GM10248 (cell line): ENCODE measurements at regions of chr10 and their contacts with region 1.

Region 1: DNA sequence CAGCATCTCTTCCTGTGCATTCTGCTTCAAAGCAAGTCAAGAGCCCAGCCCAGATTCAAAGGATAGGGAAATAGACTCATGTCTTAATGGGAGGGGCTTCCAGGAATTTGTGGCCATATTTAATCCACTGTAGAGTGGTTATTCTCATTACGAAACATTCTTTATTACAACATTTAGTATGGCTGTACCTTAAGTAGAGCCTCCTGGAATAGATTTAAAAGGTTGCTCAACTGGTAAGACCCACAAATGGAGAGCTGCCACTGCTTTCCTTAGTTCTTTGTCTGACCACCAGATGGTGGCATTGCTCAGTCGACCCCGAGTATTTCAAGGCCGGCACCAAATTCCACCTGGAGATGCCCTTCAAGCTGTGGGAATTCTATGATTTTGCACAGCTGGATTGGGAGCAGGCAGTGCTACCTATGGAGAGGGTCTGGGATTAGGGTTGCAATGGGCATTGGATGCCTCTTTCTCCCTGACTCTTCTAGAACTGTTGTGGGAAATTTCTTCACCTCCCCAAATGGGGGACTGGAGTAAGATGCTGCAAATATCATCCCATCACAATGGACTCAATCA is 102.2 kb downstream of the RBM20 start:
- DNase-seq: peak; percentile 45
- CTCF ChIP-seq: peak; percentile 45

Region 2: DNA sequence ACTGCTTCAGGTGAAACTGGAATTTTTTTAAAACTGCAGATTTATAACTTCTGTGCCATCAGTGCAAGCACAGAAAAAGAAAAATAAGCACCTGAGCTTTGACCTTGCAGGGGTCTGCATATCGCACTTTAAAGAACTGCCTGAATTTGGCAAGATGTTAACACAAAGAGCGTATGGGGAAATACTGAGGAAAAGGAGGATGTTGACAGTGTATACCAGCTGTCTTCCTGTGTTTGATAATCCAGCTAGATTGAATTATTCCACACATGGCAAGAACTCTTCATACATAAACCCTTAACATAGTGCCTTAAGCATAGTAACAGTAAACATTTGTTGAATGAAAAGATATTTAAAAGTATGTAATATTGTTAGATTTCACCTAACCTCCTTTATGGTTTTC is 148.9 kb before region 1 on chr10:
- CTCF ChIA-PET with region 1: no interaction called
- POLR2A ChIA-PET with region 1: no interaction called
- DNase-seq: no peak
- CTCF ChIP-seq: no peak

Region 3: DNA sequence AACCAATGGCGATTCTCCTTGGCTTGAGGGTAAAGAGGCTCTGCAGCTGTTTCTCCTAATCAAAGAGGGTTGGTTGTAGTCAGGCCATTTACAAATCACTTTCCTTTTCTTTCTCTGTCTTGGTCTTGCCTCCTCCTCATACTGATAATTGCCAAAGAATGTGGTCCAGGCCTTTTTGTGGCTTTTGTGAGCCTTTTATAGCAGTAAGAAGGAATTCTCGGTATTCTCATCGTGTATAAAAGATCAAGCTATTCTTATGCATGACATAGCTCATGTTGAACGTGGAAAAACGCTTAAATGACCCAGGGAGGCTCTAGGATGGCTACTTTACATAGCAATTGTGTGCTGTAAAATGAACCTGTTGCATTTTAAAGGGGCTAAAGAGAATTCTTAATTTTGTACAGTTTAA is 39.6 kb before region 1 on chr10:
- CTCF ChIA-PET with region 1: no interaction called
- POLR2A ChIA-PET with region 1: no interaction called
- DNase-seq: no peak
- CTCF ChIP-seq: no peak

Region 4: DNA sequence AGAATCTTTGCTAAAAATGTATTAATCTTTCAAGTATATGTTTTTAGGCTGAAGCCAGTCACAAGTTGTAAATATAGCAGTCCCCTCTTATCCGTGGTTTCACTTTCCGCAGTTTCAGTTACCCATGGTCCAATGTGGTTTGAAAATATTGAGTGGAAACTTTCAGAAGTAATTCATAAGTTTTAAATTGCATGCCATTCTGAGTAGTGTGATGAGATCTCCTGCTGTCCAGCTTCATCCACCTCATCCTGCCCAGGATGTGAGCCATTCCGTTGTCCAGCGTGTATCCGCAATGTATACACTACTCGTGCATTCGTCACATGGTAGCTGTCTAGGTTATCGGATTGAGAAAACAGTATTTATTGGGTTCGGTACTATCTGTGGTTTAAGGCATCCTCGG is 137.6 kb after region 1 on chr10:
- CTCF ChIA-PET with region 1: interaction called, 11 read pairs
- POLR2A ChIA-PET with region 1: no interaction called
- DNase-seq: no peak
- CTCF ChIP-seq: no peak

Region 5: GRCh38 chr10:110893559-110894179 is 147.3 kb after region 1 on chr10:
- CTCF ChIA-PET with region 1: interaction called, 14 read pairs
- POLR2A ChIA-PET with region 1: no interaction called
- DNase-seq: peak; percentile 28
- CTCF ChIP-seq: peak; percentile 39